ENCODE measurements at regions of chr10 and their contacts with region 1.

Region 1: DNA sequence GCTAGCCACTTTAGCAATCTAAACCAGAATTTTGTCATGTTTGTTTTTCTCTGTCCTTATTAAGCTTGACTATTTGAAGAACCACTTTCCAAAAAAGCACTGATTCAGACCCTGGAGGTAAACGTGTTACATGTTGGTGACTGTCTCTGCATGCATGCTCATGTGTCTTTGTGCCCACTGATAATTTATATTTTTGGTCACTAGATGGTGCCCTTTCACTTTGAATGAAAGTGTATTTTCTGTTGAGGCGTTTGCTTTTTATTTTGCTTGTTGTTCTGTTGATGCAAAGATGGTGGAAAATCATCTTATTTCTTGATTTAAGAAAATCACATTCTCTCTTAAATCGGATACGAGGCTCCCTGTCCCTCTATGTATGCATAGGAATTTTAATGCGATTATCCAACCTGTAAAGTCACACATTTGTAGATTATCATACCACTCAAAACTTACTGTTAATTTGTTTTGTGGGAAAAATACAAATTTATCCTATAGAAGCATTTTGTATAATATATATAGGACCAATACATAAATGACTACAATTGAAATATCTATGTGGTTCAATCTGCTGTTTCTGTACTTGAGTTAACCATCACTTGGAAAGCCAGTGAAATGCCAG is 269.3 kb downstream of the BICC1 start:
- DNase-seq: peak; percentile 8
- ATAC-seq: peak; percentile 77
- H3K4me3 ChIP-seq: no peak overlapping the region
- H3K27ac ChIP-seq: no peak overlapping the region
- H3K4me1 ChIP-seq: no peaks in the 10 kb centered on the region
- H3K27me3 ChIP-seq: no peaks in the 10 kb centered on the region
- CTCF ChIP-seq: peak in 2 of 3 experiments; percentile 47 to 70; a peak in 4 of 6 replicates
- EP300 ChIP-seq: no peak
- POLR2A ChIP-seq: no peak
- RAD21 ChIP-seq: peak; percentile 77

Region 2: DNA sequence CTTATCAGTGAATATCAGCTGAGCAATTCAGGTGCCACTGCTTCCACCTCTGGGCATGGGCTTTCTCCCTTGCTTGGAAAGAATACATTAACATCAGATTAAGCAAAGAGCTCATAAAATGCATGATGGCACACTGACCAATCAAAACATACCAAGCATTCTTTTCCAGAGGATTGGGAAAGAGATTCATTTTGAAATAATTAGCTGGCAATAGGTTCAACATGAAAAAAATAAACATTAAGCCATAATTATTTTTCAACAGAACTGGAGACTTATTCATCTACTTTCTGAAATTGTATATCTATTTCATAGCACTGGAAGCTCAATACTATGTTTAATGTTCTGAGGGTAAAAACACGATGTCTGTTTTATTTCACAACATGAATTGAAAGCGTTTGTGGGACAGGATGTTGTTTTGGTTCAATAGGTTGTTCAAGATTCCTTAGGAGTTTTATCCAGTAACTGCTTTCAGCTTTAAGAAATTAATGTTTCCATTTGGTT is 343.6 kb before region 1 on chr10:
- CTCF ChIA-PET with region 1: no interaction called
- POLR2A ChIA-PET with region 1: no interaction called
- RAD21 ChIA-PET with region 1: no interaction called
- SMC1A ChIA-PET with region 1: no interaction called
- in situ Hi-C with region 1: no loop called
- intact Hi-C with region 1: no loop called
- DNase-seq: no peak
- ATAC-seq: no peak
- H3K4me3 ChIP-seq: no peak overlapping the region
- H3K27ac ChIP-seq: no peak overlapping the region
- H3K4me1 ChIP-seq: no peaks in the 10 kb centered on the region
- H3K27me3 ChIP-seq: no peaks in the 10 kb centered on the region
- CTCF ChIP-seq: no peak
- EP300 ChIP-seq: no peak
- POLR2A ChIP-seq: no peak
- RAD21 ChIP-seq: no peak

Region 3: GRCh38 chr10:59580026-59580863 is 798.3 kb after region 1 on chr10:
- CTCF ChIA-PET with region 1: interaction called, 12 read pairs
- POLR2A ChIA-PET with region 1: no interaction called
- RAD21 ChIA-PET with region 1: interaction called, 4 read pairs
- SMC1A ChIA-PET with region 1: interaction called, 6 read pairs
- in situ Hi-C with region 1: no loop called
- intact Hi-C with region 1: no loop called
- DNase-seq: no peak
- ATAC-seq: no peak
- H3K4me3 ChIP-seq: no peak overlapping the region
- H3K27ac ChIP-seq: no peak overlapping the region
- H3K4me1 ChIP-seq: no peaks in the 10 kb centered on the region
- H3K27me3 ChIP-seq: no peaks in the 10 kb centered on the region
- CTCF ChIP-seq: peak; percentile 18 to 37 (median 20); a peak in 3 of 6 replicates
- EP300 ChIP-seq: no peak
- POLR2A ChIP-seq: no peak
- RAD21 ChIP-seq: peak; percentile 63

Region 4: GRCh38 chr10:59617996-59618395 is 836.0 kb after region 1 on chr10:
- CTCF ChIA-PET with region 1: interaction called, 53 read pairs
- POLR2A ChIA-PET with region 1: no interaction called
- RAD21 ChIA-PET with region 1: interaction called, 3 read pairs
- SMC1A ChIA-PET with region 1: interaction called, 26 read pairs
- in situ Hi-C with region 1: loop called (anchors 5 kb)
- intact Hi-C with region 1: loop called (anchors 1 kb)
- DNase-seq: no peak
- ATAC-seq: no peak
- H3K4me3 ChIP-seq: no peak overlapping the region
- H3K27ac ChIP-seq: no peak overlapping the region
- H3K4me1 ChIP-seq: no peaks in the 10 kb centered on the region
- H3K27me3 ChIP-seq: no peaks in the 10 kb centered on the region
- CTCF ChIP-seq: no peak
- EP300 ChIP-seq: no peak
- POLR2A ChIP-seq: no peak
- RAD21 ChIP-seq: no peak

Region 5: GRCh38 chr10:59808896-59809643 is 1027.1 kb after region 1 on chr10:
- CTCF ChIA-PET with region 1: no interaction called
- POLR2A ChIA-PET with region 1: no interaction called
- RAD21 ChIA-PET with region 1: no interaction called
- SMC1A ChIA-PET with region 1: no interaction called
- in situ Hi-C with region 1: no loop called
- intact Hi-C with region 1: loop called (anchors 10 kb)
- DNase-seq: peak; percentile 28
- ATAC-seq: peak; percentile 96
- H3K4me3 ChIP-seq: no peak overlapping the region
- H3K27ac ChIP-seq: no peak overlapping the region
- H3K4me1 ChIP-seq: no peaks in the 10 kb centered on the region
- H3K27me3 ChIP-seq: no peaks in the 10 kb centered on the region
- CTCF ChIP-seq: peak; percentile 72 to 81 (median 78)
- EP300 ChIP-seq: no peak
- POLR2A ChIP-seq: no peak
- RAD21 ChIP-seq: peak; percentile 81

Region 6: DNA sequence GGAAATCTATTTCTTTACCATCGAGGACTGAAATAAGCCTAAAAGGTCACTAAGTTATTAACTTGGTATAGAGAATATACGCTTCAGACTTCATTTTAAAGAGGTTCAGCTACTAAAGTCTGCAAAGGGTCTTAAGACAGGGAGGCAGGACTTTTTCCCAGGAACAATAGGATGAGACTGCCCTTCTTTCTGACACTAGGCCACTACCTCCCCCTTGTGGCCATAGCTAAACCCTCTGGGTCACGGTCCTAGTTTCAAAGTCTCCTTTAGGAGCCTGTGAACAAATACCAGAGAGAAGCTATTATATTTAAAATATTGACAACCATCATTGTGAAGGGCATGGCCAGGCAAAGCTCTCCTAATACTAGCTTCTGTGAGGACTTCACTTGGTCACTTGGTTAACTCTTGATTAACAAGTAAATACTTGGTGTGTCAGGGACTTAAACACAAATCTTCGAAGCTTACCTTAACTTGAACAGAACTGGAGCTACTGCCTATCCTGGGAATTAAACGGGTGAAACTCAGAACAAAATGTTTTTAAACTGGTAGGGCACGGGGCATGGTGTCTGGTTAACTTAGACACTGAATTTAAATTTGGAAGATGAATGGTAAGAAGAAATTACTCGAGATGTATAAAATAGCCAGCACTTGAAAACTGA is 1048.7 kb after region 1 on chr10:
- CTCF ChIA-PET with region 1: no interaction called
- POLR2A ChIA-PET with region 1: no interaction called
- RAD21 ChIA-PET with region 1: no interaction called
- SMC1A ChIA-PET with region 1: no interaction called
- in situ Hi-C with region 1: no loop called
- intact Hi-C with region 1: loop called (anchors 2 kb)
- DNase-seq: no peak
- ATAC-seq: peak; percentile 53
- H3K4me3 ChIP-seq: no peak overlapping the region
- H3K27ac ChIP-seq: no peak overlapping the region
- H3K4me1 ChIP-seq: peaks cover 34% of the 10 kb centered on the region
- H3K27me3 ChIP-seq: no peaks in the 10 kb centered on the region
- CTCF ChIP-seq: peak; percentile 49 to 71 (median 61)
- EP300 ChIP-seq: no peak
- POLR2A ChIP-seq: no peak
- RAD21 ChIP-seq: peak; percentile 55

Region 7: GRCh38 chr10:60032723-60033122 is 1250.7 kb after region 1 on chr10:
- CTCF ChIA-PET with region 1: interaction called, 3 read pairs
- POLR2A ChIA-PET with region 1: no interaction called
- RAD21 ChIA-PET with region 1: no interaction called
- SMC1A ChIA-PET with region 1: no interaction called
- in situ Hi-C with region 1: loop called (anchors 10 kb)
- intact Hi-C with region 1: no loop called
- DNase-seq: peak; percentile 23
- ATAC-seq: peak; percentile 83
- H3K4me3 ChIP-seq: no peak overlapping the region
- H3K27ac ChIP-seq: no peak overlapping the region
- H3K4me1 ChIP-seq: peaks cover 15% of the 10 kb centered on the region
- H3K27me3 ChIP-seq: no peaks in the 10 kb centered on the region; a peak in 1 of 4 replicates
- CTCF ChIP-seq: peak; percentile 56 to 71 (median 68)
- EP300 ChIP-seq: no peak
- POLR2A ChIP-seq: no peak
- RAD21 ChIP-seq: peak; percentile 79